ENCODE measurements at regions of chr4 and their contacts with region 1.

Region 1: DNA sequence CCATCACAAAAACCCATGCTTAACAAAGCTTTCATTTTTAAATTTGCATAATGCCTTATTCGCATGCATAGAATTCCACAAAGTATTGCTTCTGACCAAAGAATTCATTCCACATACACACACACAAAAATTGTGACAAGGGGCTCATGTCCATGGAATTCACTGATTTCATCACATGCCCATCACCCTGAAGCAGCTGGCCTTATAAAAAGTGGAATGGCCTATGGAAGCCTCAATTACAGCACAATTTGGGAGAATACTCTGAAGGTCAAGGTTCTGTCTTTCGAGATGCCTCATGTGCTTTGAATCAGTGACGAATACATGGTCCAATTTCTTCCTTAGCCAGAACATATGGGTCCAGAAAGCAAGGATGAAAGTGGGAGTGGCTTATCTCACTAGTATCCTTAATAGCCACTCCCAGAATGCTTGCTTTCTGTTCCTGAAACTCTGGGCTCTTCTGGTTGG is 165.7 kb downstream of the KDR start:
- DNase-seq: no peak
- H3K4me3 ChIP-seq: no peak overlapping the region
- H3K27ac ChIP-seq: no peak overlapping the region
- H3K4me1 ChIP-seq: no peaks in the 10 kb centered on the region
- H3K27me3 ChIP-seq: no peaks in the 10 kb centered on the region
- CTCF ChIP-seq: no peak
- POLR2A ChIP-seq: no peak

Region 2: GRCh38 chr4:54333657-54334056 is 626.0 kb before region 1 on chr4:
- intact Hi-C with region 1: loop called (anchors 10 kb)
- DNase-seq: no peak
- H3K4me3 ChIP-seq: no peak overlapping the region
- H3K27ac ChIP-seq: no peak overlapping the region
- H3K4me1 ChIP-seq: no peaks in the 10 kb centered on the region
- H3K27me3 ChIP-seq: no peaks in the 10 kb centered on the region
- CTCF ChIP-seq: no peak
- POLR2A ChIP-seq: no peak

Region 3: GRCh38 chr4:54378461-54378860 is 581.2 kb before region 1 on chr4:
- intact Hi-C with region 1: no loop called
- DNase-seq: no peak
- H3K4me3 ChIP-seq: no peak overlapping the region
- H3K27ac ChIP-seq: no peak overlapping the region
- H3K4me1 ChIP-seq: no peaks in the 10 kb centered on the region
- H3K27me3 ChIP-seq: no peaks in the 10 kb centered on the region
- CTCF ChIP-seq: no peak
- POLR2A ChIP-seq: no peak

Region 4: DNA sequence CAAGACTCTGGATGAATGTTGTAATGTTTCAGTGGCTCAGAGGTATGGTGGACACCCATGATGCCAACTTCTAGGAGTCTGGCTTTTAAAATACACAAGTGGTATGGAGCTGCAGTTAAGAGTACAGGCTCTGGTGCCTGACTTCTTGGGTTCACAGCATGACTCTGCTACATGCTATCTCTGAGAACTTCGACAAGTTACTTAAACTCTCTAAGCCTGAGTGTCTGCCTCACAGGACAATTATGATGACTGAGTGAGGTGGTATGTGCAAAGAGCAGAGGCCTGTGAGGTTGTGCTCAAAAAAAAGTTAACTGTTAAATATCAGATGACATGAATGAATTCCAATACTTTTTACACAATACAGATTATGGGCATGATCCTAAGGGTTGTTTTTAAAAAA is 295.5 kb after region 1 on chr4:
- intact Hi-C with region 1: no loop called
- DNase-seq: no peak
- H3K4me3 ChIP-seq: no peak overlapping the region
- H3K27ac ChIP-seq: no peak overlapping the region
- H3K4me1 ChIP-seq: no peaks in the 10 kb centered on the region
- H3K27me3 ChIP-seq: no peaks in the 10 kb centered on the region
- CTCF ChIP-seq: no peak
- POLR2A ChIP-seq: no peak

Measured in testis (tissue), 5 donors.